ENCODE measurements at regions of chr20 and their contacts with region 1.

Region 1: DNA sequence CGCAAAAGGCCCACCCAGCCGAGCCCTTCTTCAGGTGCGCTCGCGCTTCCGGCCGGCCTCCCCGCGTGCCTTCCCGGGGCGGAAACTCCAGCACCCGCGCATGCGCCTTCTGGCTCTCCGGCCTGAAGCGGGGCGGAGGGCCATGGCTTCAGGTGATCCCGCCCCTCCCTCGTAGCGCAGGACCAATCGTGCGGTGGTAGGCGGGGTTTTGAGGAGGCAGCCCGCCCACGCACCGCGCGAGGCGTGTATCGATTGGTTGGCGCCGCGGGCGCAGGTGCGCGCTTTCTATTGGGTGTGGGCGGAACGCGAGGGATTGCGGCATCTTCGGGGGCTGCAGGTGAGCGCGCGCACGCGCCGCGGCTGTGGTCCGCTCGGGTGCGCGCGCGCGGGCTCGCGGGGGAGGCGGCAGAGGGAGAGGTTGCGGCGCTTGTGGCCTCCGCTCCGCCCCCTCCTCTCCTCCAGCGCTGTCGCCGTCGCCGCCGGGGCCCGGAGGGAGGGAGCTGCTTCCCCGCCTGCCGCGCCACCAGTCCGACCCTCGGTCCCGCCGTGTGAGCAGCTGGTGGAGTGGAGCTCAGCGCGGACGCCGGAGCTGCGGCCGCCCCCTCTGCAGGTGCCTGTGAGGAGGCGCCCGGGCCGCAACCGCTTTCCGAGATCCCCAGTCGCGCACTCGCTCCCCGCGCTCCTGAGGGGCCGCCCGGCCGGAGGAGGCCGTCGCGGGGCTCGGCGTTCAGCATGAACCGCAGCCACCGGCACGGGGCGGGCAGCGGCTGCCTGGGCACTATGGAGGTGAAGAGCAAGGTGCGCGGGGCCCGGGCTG is at the start of gene PARD6B:
- DNase-seq: peak; percentile 93 to 99 (median 97)
- H3K4me3 ChIP-seq: peak within 1 kb of the TSS; percentile 47 to 97 (median 88)
- H3K27ac ChIP-seq: peak within 1 kb of the TSS in 55 of 59 donors; percentile 20 to 86 (median 72)
- H3K27me3 ChIP-seq: no peaks in the 10 kb centered on the region
- CTCF ChIP-seq: peak in 19 of 56 donors; percentile 5 to 50 (median 17)
- total RNA-seq, gene PARD6B: 2.6 to 11.1 (median 5.6) TPM

Region 2: GRCh38 chr20:50226093-50226974 is 504.9 kb before region 1 on chr20:
- intact Hi-C with region 1: no loop called
- DNase-seq: no peak
- H3K4me3 ChIP-seq: no peak overlapping the region
- H3K27ac ChIP-seq: peak overlapping the region in 3 of 59 donors; percentile 10 to 30 (median 14)
- H3K27me3 ChIP-seq: no peaks in the 10 kb centered on the region
- CTCF ChIP-seq: no peak

Region 3: DNA sequence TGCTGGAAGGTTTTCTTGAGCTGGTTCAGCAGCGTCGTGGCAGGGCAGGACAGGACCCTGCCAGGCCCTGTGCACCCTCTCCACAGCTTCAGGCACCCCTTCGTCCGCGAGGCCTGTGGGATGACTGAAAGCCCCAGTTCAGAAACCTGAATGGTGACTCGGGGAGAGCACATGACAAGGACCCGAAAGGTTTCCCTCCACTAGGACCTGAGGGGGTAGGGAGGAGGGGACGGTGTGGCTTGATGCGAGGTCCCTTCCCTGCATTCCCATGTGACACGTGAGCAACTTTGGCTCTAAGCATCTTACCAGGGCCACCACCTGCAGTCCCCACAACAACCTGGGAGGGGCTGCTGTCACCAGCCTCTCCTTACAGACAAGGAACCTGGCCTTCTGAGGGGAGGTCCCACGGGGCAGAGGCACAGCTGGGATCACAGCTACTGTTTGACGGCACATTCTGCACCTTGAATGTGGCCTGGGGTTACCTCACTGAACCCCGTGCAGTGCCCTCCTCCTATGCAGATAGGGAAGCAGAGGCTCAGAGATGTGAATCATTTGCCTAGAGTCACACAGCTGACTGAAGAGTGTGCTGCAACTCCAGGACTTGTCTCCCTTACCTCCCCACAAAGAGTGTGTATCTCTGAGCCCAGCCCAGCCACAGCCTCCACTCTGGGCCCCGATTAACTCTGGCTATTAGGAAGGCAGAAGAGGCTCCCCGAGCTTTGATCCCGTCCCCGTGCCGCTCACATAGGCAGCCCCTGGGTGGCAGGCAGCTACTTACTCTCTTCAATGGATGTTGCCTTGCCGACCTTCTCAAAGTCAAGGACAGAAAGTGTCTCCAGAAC is 136.5 kb before region 1 on chr20:
- intact Hi-C with region 1: loop called in 1 of 2 experiments (anchors 10 kb)
- DNase-seq: no peak
- H3K4me3 ChIP-seq: no peak overlapping the region
- H3K27ac ChIP-seq: no peak overlapping the region
- H3K27me3 ChIP-seq: peaks cover 0 to 27% (median 0%) of the 10 kb centered on the region in 45 donors
- CTCF ChIP-seq: no peak

Region 4: DNA sequence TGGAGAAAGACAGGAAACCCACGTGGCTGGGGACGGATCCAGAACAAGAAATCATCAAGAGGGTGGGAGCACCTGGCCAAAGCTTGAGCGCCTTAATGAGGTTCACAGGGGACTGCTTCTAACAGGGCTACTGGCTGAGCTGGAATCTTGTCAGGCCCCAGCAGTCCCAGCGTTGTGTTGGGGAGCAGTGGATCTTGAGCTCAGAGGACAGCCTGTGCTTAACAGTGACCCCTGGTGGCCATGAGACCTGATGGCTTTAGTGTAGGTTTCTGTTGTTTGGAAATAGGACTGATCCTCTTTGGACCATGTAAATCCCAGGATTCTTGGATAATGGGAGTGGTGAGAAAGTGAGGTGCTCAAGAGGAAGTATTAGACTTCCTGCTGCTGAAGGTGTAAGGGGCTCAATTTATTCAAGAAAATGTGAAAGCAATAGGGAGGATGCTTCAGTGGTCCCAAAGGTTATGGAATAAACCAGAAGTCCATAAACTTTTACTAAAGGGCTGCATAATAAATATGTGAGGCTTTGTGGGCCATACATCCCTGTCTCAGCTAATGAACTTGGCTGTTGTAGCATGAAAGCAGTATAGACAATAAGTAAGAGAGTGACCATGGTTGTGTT is 595.0 kb after region 1 on chr20:
- intact Hi-C with region 1: no loop called
- DNase-seq: peak in 4 of 10 donors; percentile 30 to 69 (median 42)
- H3K4me3 ChIP-seq: no peak overlapping the region
- H3K27ac ChIP-seq: no peak overlapping the region
- H3K27me3 ChIP-seq: no peaks in the 10 kb centered on the region
- CTCF ChIP-seq: peak in 35 of 56 donors; percentile 5 to 76 (median 56)

Measured in dorsolateral prefrontal cortex (tissue), 120 donors.